ENCODE measurements at regions of chr6 and their contacts with region 1.

Region 1: GRCh38 chr6:159042003-159042825 is 2.6 kb downstream of the TAGAP start:
- DNase-seq: peak; percentile 59 to 96 (median 74)
- ATAC-seq: peak; percentile 50
- H3K4me3 ChIP-seq: peak overlapping the region; percentile 63 to 90
- H3K4me3 Mint-ChIP-seq: peak overlapping the region; percentile 99
- H3K27ac ChIP-seq: peak overlapping the region; percentile 82 to 92
- H3K27ac Mint-ChIP-seq: peak overlapping the region; percentile 95
- H3K4me1 ChIP-seq: peaks cover 58% of the 10 kb centered on the region
- H3K4me1 Mint-ChIP-seq: peaks cover 69% of the 10 kb centered on the region
- H3K27me3 ChIP-seq: no peaks in the 10 kb centered on the region
- H3K27me3 Mint-ChIP-seq: no peaks in the 10 kb centered on the region
- CTCF ChIP-seq: peak; percentile 92

Region 2: GRCh38 chr6:158819213-158819909 is 222.9 kb before region 1 on chr6 and contains the start of gene EZR:
- CTCF ChIA-PET with region 1: no interaction called
- POLR2A ChIA-PET with region 1: no interaction called
- intact Hi-C with region 1: loop called in 1 of 2 experiments (anchors 5 kb)
- DNase-seq: peak; percentile 75 to 95 (median 88)
- ATAC-seq: peak; percentile 63
- H3K4me3 ChIP-seq: peak within 1 kb of the TSS; percentile 49 to 83
- H3K4me3 Mint-ChIP-seq: peak within 1 kb of the TSS; percentile 98
- H3K27ac ChIP-seq: peak within 1 kb of the TSS; percentile 89 to 91
- H3K27ac Mint-ChIP-seq: peak within 1 kb of the TSS; percentile 97
- H3K4me1 ChIP-seq: peaks cover 27% of the 10 kb centered on the region
- H3K4me1 Mint-ChIP-seq: peaks cover 43% of the 10 kb centered on the region
- H3K27me3 ChIP-seq: no peaks in the 10 kb centered on the region
- H3K27me3 Mint-ChIP-seq: no peaks in the 10 kb centered on the region
- CTCF ChIP-seq: no peak
- total RNA-seq, gene EZR: 626 to 627 TPM

Region 3: DNA sequence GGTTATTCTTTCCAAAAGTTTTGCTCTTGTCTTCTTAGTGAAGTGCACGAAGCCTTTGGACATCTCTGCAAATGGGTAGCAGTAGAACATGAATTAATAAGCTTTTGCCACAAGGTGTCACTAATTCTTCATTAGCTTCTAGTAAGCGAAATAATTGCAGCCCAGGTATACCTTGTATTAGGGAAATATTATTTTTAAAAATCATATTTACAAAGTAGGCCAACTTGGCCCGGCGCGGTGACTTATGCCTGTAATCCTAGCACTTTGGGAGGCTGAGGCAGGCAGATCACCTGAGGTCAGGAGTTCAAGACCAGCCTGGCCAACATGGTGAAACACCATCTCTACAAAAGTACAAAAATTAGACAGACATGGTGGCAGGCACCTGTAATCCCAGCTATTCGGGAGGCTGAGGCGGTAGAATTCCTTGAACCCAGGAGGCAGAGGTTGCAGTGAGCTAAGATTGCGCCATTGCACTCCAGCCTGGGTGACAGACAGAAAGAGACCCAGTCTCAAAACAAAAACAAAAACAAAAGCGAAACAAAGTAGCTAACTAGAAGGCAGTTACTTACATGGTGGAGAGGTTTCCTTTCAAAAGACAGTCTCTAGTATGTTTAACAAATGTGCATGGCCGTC is 33.4 kb before region 1 on chr6:
- CTCF ChIA-PET with region 1: interaction called, 118 read pairs
- POLR2A ChIA-PET with region 1: interaction called, 6 read pairs
- intact Hi-C with region 1: loop called (anchors 1 to 2 kb)
- DNase-seq: peak in 3 of 9 experiments; percentile 58 to 78 (median 68)
- ATAC-seq: peak; percentile 78
- H3K4me3 ChIP-seq: peak overlapping the region in 1 of 2 experiments; percentile 32
- H3K4me3 Mint-ChIP-seq: peak overlapping the region; percentile 67
- H3K27ac ChIP-seq: peak overlapping the region in 1 of 2 experiments; percentile 24
- H3K27ac Mint-ChIP-seq: peak overlapping the region; percentile 12
- H3K4me1 ChIP-seq: peaks cover 6% of the 10 kb centered on the region
- H3K4me1 Mint-ChIP-seq: peaks cover 36% of the 10 kb centered on the region
- H3K27me3 ChIP-seq: no peaks in the 10 kb centered on the region
- H3K27me3 Mint-ChIP-seq: no peaks in the 10 kb centered on the region
- CTCF ChIP-seq: peak; percentile 73

Region 4: GRCh38 chr6:159062564-159062945 is 20.3 kb after region 1 on chr6:
- CTCF ChIA-PET with region 1: interaction called, 59 read pairs
- POLR2A ChIA-PET with region 1: interaction called, 64 read pairs
- intact Hi-C with region 1: loop called (anchors 1 kb)
- DNase-seq: peak in 8 of 9 experiments; percentile 48 to 91 (median 70)
- ATAC-seq: peak; percentile 90
- H3K4me3 ChIP-seq: peak overlapping the region in 1 of 2 experiments; percentile 27
- H3K4me3 Mint-ChIP-seq: peak overlapping the region; percentile 68
- H3K27ac ChIP-seq: peak overlapping the region; percentile 87 to 92
- H3K27ac Mint-ChIP-seq: peak overlapping the region; percentile 93
- H3K4me1 ChIP-seq: peaks cover 57% of the 10 kb centered on the region
- H3K4me1 Mint-ChIP-seq: peaks cover 83% of the 10 kb centered on the region
- H3K27me3 ChIP-seq: no peaks in the 10 kb centered on the region
- H3K27me3 Mint-ChIP-seq: no peaks in the 10 kb centered on the region
- CTCF ChIP-seq: no peak

Region 5: GRCh38 chr6:159110013-159110412 is 67.8 kb after region 1 on chr6:
- CTCF ChIA-PET with region 1: interaction called, 278 read pairs
- POLR2A ChIA-PET with region 1: interaction called, 41 read pairs
- intact Hi-C with region 1: no loop called
- DNase-seq: peak in 4 of 9 experiments; percentile 26 to 76 (median 54)
- ATAC-seq: no peak
- H3K4me3 ChIP-seq: no peak overlapping the region
- H3K4me3 Mint-ChIP-seq: no peak overlapping the region
- H3K27ac ChIP-seq: no peak overlapping the region
- H3K27ac Mint-ChIP-seq: no peak overlapping the region
- H3K4me1 ChIP-seq: peaks cover 50% of the 10 kb centered on the region
- H3K4me1 Mint-ChIP-seq: peaks cover 60% of the 10 kb centered on the region
- H3K27me3 ChIP-seq: no peaks in the 10 kb centered on the region
- H3K27me3 Mint-ChIP-seq: no peaks in the 10 kb centered on the region
- CTCF ChIP-seq: peak; percentile 86